Activated CD8-positive, alpha-beta T cell treated with anti-CD3 and anti-CD28 coated beads, Interleukin-2, amount 10 ng/mL, durations not matched to agents 7 days and 5 days (primary cell): ENCODE measurements at regions of chr15 and their contacts with region 1.

Region 1: GRCh38 chr15:79896637-79897379 is at the start of gene MTHFS:
- DNase-seq: peak; percentile 81
- ATAC-seq: peak; percentile 86
- H3K4me3 Mint-ChIP-seq: peak within 1 kb of the TSS; percentile 97
- H3K27ac Mint-ChIP-seq: peak within 1 kb of the TSS; percentile 100
- H3K4me1 Mint-ChIP-seq: peaks cover 56% of the 10 kb centered on the region
- H3K27me3 Mint-ChIP-seq: no peaks in the 10 kb centered on the region
- total RNA-seq, gene MTHFS: 37.0 to 41.3 TPM

Region 2: GRCh38 chr15:79769069-79769481 is 127.7 kb before region 1 on chr15:
- CTCF ChIA-PET with region 1: no interaction called
- POLR2A ChIA-PET with region 1: no interaction called
- DNase-seq: no peak
- ATAC-seq: no peak
- H3K4me3 Mint-ChIP-seq: no peak overlapping the region
- H3K27ac Mint-ChIP-seq: no peak overlapping the region
- H3K4me1 Mint-ChIP-seq: no peaks in the 10 kb centered on the region
- H3K27me3 Mint-ChIP-seq: peaks cover 15% of the 10 kb centered on the region

Region 3: DNA sequence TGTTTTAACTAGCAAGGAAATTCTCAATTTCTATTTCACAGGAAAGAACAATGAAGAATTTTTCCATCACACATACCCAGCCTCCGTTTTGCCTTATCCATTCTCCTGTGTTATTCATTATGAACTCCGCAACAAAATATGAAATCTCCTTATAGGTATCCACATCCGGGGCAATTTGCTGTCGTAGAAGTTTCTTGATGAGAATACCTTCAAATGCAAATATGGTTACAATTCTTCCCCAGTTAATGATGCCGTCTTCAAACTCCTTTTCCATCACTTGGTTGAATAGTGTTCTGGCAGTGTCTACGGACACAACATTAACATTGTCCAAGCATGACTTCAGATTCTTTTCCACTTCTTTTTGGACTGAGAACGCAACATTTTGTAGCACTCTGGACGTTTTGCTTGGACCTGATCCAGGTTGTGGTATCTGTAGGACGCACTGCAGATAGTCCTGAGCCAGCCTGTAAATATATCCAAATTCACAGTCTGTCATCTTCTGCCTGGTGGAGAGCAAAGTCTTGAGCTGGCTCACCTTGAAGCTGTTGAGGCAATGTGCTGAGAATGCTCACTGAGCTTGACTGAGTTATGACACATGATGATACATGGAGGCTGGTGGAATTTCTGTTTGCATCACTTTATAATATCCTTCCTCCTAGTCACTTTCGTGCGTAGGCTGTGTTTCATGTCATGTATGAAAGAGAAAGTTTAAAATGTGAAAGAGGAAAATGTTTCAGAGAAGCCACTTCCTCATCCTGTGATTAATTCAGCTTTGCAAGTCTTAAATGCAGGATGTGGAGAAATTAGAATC is 74.0 kb after region 1 on chr15 and contains the start of gene BCL2A1:
- CTCF ChIA-PET with region 1: interaction called, 5 read pairs
- POLR2A ChIA-PET with region 1: interaction called, 41 read pairs
- DNase-seq: peak; percentile 73
- ATAC-seq: peak; percentile 69
- H3K4me3 Mint-ChIP-seq: peak within 1 kb of the TSS; percentile 91
- H3K27ac Mint-ChIP-seq: peak within 1 kb of the TSS; percentile 94
- H3K4me1 Mint-ChIP-seq: peaks cover 56% of the 10 kb centered on the region
- H3K27me3 Mint-ChIP-seq: no peaks in the 10 kb centered on the region
- total RNA-seq, gene BCL2A1: 23.1 to 26.3 TPM

Region 4: DNA sequence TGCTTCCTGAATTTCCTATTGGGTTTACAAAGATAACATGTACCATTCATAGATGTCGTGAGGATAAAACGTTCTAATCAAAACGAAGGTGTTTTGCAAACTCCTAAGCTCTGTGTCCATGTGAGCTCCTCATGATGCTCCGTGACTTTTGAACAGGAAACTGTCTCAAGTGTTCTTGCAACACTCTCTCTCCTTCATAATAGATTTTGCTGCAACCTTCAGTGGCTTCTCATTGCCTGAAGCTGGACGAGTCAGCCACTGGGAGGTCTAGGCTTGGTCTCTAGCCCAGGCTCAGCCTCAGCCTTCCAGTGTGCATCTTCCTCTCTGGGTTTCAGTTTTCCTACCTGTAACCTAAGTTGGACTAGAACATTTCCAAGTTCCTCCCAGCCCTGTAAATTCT is 92.9 kb after region 1 on chr15:
- CTCF ChIA-PET with region 1: interaction called, 10 read pairs
- POLR2A ChIA-PET with region 1: interaction called, 4 read pairs
- DNase-seq: no peak
- ATAC-seq: no peak
- H3K4me3 Mint-ChIP-seq: no peak overlapping the region
- H3K27ac Mint-ChIP-seq: no peak overlapping the region
- H3K4me1 Mint-ChIP-seq: peaks cover 3% of the 10 kb centered on the region
- H3K27me3 Mint-ChIP-seq: peaks cover 9% of the 10 kb centered on the region